ENCODE measurements at regions of chr19 and their contacts with region 1.

Region 1: DNA sequence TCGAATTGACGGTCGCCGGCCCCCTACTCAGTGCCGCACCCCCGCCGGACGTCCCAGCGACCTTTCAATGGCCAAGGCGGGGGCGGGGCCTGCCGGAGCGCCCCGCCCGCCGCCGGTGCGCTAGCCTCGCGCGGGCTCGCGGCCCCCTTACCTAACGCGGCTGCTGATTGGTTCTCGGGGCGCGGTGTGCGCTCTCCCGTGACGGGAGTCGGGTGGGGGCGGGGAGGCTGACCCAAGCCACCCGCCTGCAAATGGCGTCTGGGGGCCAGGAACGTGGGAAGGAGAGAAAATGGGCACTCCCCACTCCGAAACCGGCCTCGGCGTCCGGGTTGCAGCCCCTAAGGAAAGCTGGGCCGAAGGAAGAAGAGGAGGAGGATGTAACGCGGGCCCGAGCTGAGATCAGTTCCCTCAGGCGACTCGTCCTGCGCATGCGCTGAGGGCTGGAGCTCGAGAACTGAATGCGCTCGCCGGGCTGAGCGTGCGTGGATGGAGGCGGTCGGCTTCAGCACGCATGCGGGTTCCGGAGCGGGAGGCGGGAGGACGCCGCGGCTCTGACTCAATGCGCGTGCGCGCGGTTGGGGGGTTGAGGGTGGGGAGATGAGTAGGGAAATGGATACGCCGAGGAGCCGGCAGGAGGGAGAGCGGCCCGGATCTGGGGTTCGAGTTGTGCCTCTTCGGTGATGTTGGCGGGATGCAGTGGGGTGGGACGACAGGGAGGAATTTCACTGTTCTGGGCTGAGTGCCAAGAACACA is at the start of gene SMG9:
- DNase-seq: peak; percentile 99
- H3K4me3 Mint-ChIP-seq: peak within 1 kb of the TSS; percentile 98
- H3K27ac Mint-ChIP-seq: peak within 1 kb of the TSS; percentile 100
- H3K4me1 Mint-ChIP-seq: peaks cover 57% of the 10 kb centered on the region
- H3K27me3 Mint-ChIP-seq: peaks cover 2% of the 10 kb centered on the region
- total RNA-seq, gene SMG9: 86.6 and 89.2 TPM in 2 replicates

Region 2: DNA sequence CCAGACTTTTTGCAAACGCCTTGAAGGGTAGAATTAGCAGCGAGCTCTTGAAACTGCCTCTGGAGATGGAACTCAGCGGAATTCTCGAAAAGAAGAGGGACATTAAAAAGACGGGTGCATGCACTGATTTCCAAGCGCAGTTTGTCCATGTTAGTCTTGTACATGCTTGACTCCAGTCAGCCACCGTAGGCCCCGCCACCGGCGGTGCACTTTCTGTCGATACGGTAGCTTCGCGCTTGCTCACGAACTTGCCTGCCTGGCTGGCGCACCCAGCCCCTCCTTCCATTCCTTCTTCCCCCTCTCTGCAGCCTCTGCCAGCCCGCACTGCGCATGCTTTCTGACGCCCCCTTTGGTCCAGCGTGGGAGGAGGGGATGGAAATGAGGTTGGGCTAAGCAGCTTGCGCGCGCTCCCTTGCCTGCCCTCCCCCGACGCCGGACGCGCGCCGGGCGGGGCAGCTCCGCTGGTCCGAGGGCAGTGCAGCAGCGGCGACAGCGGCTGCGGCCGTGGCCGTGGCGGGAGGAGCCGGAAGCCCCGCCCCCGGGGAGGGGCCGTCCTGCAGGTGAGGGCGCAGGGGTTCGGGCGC is 221.6 kb before region 1 on chr19 and contains the start of gene ZNF575:
- intact Hi-C with region 1: loop called (anchors 2 kb)
- DNase-seq: peak; percentile 81
- H3K4me3 Mint-ChIP-seq: peak within 1 kb of the TSS; percentile 96
- H3K27ac Mint-ChIP-seq: peak within 1 kb of the TSS; percentile 99
- H3K4me1 Mint-ChIP-seq: peaks cover 23% of the 10 kb centered on the region
- H3K27me3 Mint-ChIP-seq: no peaks in the 10 kb centered on the region
- total RNA-seq, gene ZNF575: 1.4 and 2.6 TPM in 2 replicates

Region 3: GRCh38 chr19:43562698-43563241 is 191.9 kb before region 1 on chr19:
- intact Hi-C with region 1: no loop called
- DNase-seq: peak; percentile 54
- H3K4me3 Mint-ChIP-seq: peak overlapping the region; percentile 37
- H3K27ac Mint-ChIP-seq: peak overlapping the region; percentile 74
- H3K4me1 Mint-ChIP-seq: peaks cover 32% of the 10 kb centered on the region
- H3K27me3 Mint-ChIP-seq: no peaks in the 10 kb centered on the region

Region 4: GRCh38 chr19:43700395-43701000 is 54.2 kb before region 1 on chr19:
- intact Hi-C with region 1: loop called (anchors 1 kb)
- DNase-seq: no peak
- H3K4me3 Mint-ChIP-seq: peak overlapping the region; percentile 72
- H3K27ac Mint-ChIP-seq: peak overlapping the region; percentile 73
- H3K4me1 Mint-ChIP-seq: peaks cover 18% of the 10 kb centered on the region
- H3K27me3 Mint-ChIP-seq: peaks cover 11% of the 10 kb centered on the region

Region 5: DNA sequence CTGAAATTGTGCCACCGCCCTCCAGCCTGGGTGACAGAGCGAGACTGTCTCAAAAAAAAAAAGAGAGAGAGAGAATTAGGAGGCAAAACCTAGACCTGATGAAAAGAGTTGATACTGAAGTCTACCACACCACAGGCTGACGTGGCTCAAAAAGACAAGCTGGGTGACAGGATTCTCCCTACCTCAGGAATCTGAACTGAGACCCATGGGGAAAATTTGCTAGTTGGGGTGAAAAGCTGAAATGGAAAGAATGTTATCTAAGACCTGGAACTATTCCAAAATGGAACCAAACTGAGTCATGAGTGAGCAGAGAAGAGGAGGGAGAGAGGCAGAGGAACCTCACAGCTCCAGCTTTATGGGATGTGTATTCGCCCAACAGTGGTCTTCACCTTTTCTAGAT is 11.7 kb before region 1 on chr19:
- intact Hi-C with region 1: loop called (anchors 1 kb)
- DNase-seq: no peak
- H3K4me3 Mint-ChIP-seq: no peak overlapping the region
- H3K27ac Mint-ChIP-seq: no peak overlapping the region
- H3K4me1 Mint-ChIP-seq: peaks cover 39% of the 10 kb centered on the region
- H3K27me3 Mint-ChIP-seq: no peaks in the 10 kb centered on the region

Region 6: GRCh38 chr19:43765109-43765876 is 10.6 kb after region 1 on chr19:
- intact Hi-C with region 1: loop called (anchors 1 kb)
- DNase-seq: peak; percentile 81
- H3K4me3 Mint-ChIP-seq: peak overlapping the region; percentile 50
- H3K27ac Mint-ChIP-seq: peak overlapping the region; percentile 90
- H3K4me1 Mint-ChIP-seq: peaks cover 87% of the 10 kb centered on the region
- H3K27me3 Mint-ChIP-seq: no peaks in the 10 kb centered on the region

Region 7: DNA sequence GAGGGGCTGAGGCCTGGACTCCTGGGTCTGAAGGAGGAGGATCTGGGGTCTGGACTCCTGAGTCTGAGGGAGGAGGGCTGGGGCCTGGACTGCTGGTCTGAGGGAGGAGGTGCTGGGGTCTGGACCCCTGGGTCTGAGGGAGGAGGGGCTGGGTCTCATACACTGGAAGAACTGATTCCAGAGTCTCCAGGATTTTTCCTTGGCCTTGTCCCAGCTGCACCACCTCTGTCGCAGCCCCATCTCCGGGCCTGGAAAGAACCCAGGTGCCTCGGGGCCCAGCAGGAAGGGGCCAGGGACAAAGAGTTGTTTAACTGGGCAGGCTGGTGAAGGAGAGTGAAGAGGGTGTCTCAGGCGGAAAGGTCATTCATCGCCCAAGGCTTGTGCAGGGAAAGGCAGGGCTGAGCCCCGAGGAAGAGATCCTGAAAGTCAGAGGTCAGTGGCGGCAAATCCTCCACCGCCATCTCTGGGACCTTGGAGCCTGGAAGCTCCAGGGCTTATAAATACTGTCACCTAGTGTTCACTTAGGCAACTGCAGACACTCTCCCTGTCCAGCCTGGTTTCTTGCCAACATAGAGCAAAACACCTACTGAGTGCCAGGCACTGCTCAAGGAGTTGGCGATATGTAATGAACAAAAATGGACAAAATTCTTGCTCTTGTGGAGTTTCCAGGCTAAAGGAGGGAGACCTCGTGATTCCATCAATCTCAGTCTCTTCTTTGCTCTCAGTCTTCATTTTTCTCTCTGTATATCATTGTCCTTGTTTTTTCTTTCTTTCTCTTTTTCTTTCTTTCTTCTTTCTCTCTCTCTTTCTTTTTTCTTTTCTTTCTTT is 30.5 kb after region 1 on chr19:
- intact Hi-C with region 1: loop called (anchors 1 kb)
- DNase-seq: peak; percentile 51
- H3K4me3 Mint-ChIP-seq: peak overlapping the region; percentile 66
- H3K27ac Mint-ChIP-seq: peak overlapping the region; percentile 92
- H3K4me1 Mint-ChIP-seq: peaks cover 41% of the 10 kb centered on the region
- H3K27me3 Mint-ChIP-seq: no peaks in the 10 kb centered on the region

Region 8: DNA sequence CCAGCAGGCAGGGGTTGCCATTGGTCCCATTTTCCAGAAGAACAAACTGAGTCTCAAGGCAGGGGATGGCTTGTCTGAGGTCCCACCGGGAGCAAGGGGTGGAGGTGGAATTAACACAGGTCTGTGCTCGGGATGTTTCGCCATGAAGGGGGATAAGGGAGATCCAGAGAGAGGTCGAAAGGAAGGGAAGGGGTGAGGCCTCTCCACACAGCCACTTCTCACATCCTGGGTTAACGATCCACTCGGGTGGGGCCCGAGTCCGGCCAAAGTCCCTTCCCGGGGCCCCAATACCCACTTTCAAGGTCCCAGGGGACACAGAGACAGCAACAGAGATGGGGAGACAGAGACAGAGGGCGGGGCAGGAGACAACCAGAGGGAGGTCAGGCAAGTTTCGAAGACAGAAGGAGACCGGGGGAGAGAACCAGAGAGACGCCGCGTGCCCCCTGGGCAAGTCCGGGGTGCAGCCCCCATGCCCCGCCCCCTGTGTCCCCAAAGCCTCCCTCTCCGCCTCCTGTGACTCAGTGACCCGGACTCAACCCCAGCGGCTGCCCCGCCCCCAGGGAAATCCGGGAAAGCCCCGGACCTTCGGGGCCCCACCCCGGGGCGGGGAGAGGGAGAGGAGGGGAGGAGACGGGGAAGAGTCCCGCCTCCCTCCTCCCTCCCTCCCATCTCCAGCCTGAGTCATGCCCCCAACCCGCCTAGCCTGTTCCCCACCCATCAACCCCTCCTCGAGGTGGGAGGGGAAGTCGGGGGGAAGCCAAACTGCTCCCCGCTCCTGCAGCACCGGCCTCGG is 992.5 kb after region 1 on chr19:
- intact Hi-C with region 1: loop called (anchors 1 kb)
- DNase-seq: peak; percentile 87
- H3K4me3 Mint-ChIP-seq: peak overlapping the region; percentile 93
- H3K27ac Mint-ChIP-seq: peak overlapping the region; percentile 97
- H3K4me1 Mint-ChIP-seq: peaks cover 48% of the 10 kb centered on the region
- H3K27me3 Mint-ChIP-seq: no peaks in the 10 kb centered on the region

Measured in activated T-helper 1 cell treated with anti-CD3 and anti-CD28 coated beads, Interleukin-12 subunit alpha, Interleukin-12 subunit beta, Interleukin-2, Interleukin-4 antibody, amounts not matched to agents 30 ng/mL and 10 ng/mL and 1 ng/mL, durations not matched to agents 14 hours and 24 hours and 36 hours (primary cell).